Vagina (tissue), 2 donors: ENCODE measurements at regions of chr22 and their contacts with region 1.

Region 1: DNA sequence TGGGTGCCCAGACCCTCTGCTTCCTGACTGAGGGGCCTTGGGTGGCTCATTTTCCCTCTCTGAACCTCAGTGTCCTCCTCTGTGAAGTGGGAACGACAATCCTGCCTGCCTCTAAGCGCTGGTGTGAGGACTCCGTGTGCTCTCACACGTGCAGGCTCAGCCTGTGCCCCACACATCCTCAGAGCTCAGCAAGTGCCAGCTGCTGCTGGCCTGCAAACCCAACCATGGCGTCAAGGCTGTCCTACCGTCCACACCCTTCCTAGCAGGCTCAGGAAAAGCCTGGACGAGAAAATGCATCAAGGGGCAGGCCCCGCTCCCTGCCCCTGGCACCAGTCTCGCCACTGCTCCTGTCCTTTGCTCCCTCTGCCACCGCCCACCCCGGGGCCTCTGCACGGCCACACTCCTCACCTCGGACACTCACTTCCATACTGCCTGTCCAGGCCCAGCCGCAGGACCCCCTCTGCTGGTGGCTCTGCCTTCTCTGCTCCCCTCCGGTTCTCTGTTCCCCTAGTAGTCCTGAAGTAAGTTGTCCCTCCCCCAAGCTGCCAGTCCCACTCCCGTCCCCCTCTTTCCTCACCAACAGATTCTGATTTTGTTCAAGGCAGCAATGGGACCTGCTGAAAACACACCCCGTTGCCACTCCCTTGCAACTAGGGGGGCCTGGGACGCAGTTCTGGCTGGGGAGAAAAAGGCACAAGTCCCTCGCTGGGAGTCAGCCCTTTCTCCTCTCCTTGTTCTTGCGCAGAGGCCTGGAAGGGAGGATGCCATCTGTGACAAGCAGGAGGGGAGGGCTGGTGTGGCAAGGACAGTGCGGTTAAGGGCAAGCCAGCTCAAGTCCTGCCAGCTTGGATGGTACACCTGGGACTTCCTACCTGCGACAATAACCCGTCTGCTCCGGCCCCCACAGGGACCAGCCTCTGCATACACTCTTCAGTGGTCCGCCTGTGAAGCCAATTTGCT is 62.2 kb downstream of the ARFGAP3 start:
- DNase-seq: no peak
- H3K4me3 ChIP-seq: no peak overlapping the region
- H3K27ac ChIP-seq: peak overlapping the region; percentile 13
- H3K4me1 ChIP-seq: peaks cover 17% of the 10 kb centered on the region
- H3K27me3 ChIP-seq: no peaks in the 10 kb centered on the region
- CTCF ChIP-seq: no peak
- POLR2A ChIP-seq: no peak

Region 2: GRCh38 chr22:42511401-42511891 is 283.4 kb before region 1 on chr22:
- intact Hi-C with region 1: no loop called
- DNase-seq: no peak
- H3K4me3 ChIP-seq: no peak overlapping the region
- H3K27ac ChIP-seq: no peak overlapping the region
- H3K4me1 ChIP-seq: no peaks in the 10 kb centered on the region
- H3K27me3 ChIP-seq: no peaks in the 10 kb centered on the region
- CTCF ChIP-seq: no peak
- POLR2A ChIP-seq: no peak

Region 3: DNA sequence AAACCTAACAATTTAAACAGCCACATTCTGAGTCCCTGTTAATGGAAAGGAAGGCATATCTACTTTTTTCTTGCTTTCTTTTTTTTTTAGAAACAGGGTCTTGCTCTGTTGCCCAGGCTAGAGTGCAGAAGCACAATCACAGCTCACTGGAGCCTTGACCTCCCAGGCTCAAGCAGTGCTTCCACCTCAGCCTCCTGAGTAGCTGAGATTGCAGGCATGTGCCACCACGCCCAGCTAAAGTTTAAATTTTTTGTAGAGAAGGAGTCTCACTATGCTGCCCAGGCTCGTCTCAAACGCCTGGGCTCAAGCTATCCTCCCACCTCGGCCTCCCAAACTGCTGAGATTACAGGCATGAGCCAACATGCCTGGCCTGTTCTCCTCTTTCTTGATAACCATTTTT is 36.9 kb after region 1 on chr22:
- intact Hi-C with region 1: loop called (anchors 1 kb)
- DNase-seq: no peak
- H3K4me3 ChIP-seq: no peak overlapping the region
- H3K27ac ChIP-seq: no peak overlapping the region
- H3K4me1 ChIP-seq: no peaks in the 10 kb centered on the region
- H3K27me3 ChIP-seq: no peaks in the 10 kb centered on the region
- CTCF ChIP-seq: no peak
- POLR2A ChIP-seq: no peak

Region 4: GRCh38 chr22:43488031-43488866 is 693.4 kb after region 1 on chr22:
- intact Hi-C with region 1: no loop called
- DNase-seq: no peak
- H3K4me3 ChIP-seq: no peak overlapping the region
- H3K27ac ChIP-seq: no peak overlapping the region
- H3K4me1 ChIP-seq: no peaks in the 10 kb centered on the region
- H3K27me3 ChIP-seq: no peaks in the 10 kb centered on the region
- CTCF ChIP-seq: no peak
- POLR2A ChIP-seq: no peak